IMR-90 (cell line): ENCODE measurements at regions of chr1 and their contacts with region 1.

Region 1: GRCh38 chr1:116737020-116737854 is 17.0 kb upstream of the CD2 start:
- DNase-seq: peak; percentile 35
- ATAC-seq: peak; percentile 80
- H3K4me3 ChIP-seq: no peak overlapping the region
- H3K27ac ChIP-seq: no peak overlapping the region
- H3K4me1 ChIP-seq: no peaks in the 10 kb centered on the region
- H3K27me3 ChIP-seq: no peaks in the 10 kb centered on the region
- CTCF ChIP-seq: peak; percentile 75
- POLR2A ChIP-seq: no peak
- RAD21 ChIP-seq: peak; percentile 71

Region 2: GRCh38 chr1:116817582-116818064 is 80.4 kb after region 1 on chr1:
- CTCF ChIA-PET with region 1: no interaction called
- POLR2A ChIA-PET with region 1: no interaction called
- dilution Hi-C with region 1: no loop called
- in situ Hi-C with region 1: no loop called
- intact Hi-C with region 1: loop called (anchors 1 kb)
- DNase-seq: peak; percentile 4
- ATAC-seq: 0 out of 2 replicates have a peak, but pooled peaks have one; percentile 27
- H3K4me3 ChIP-seq: no peak overlapping the region
- H3K27ac ChIP-seq: no peak overlapping the region
- H3K4me1 ChIP-seq: no peaks in the 10 kb centered on the region
- H3K27me3 ChIP-seq: no peaks in the 10 kb centered on the region
- CTCF ChIP-seq: peak; percentile 27; the same call in 1 of the 2 replicates
- POLR2A ChIP-seq: no peak
- RAD21 ChIP-seq: no peak

Region 3: GRCh38 chr1:117051224-117052064 is 314.2 kb after region 1 on chr1:
- CTCF ChIA-PET with region 1: interaction called, 4 read pairs
- POLR2A ChIA-PET with region 1: no interaction called
- dilution Hi-C with region 1: no loop called
- in situ Hi-C with region 1: loop called (anchors 5 kb)
- intact Hi-C with region 1: loop called (anchors 1 kb)
- DNase-seq: no peak
- ATAC-seq: no peak
- H3K4me3 ChIP-seq: no peak overlapping the region
- H3K27ac ChIP-seq: no peak overlapping the region
- H3K4me1 ChIP-seq: no peaks in the 10 kb centered on the region
- H3K27me3 ChIP-seq: no peaks in the 10 kb centered on the region
- CTCF ChIP-seq: no peak
- POLR2A ChIP-seq: no peak
- RAD21 ChIP-seq: no peak